HepG2 (cell line): ENCODE measurements at regions of chr1 and their contacts with region 1.

Region 1: DNA sequence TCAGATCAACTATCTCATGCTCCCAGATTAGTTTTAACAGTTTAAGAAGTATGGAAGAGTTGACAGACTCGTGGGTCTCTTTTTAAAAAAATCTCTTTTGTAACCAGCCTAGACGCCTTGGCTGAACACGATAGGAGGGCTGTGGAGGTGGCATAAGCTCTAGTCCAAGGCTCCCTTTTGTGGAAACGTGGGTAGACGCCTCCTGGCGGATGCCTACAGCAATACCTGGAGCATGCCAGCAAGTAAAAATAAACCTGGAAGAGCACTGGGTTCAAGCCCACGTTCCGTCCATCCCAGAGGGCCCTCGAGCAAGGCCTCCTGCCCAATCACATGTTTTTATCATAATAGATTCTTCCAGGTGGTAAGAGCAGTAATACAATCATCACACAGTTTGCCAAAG is 87.9 kb downstream of the RGS7 start:
- DNase-seq: peak; percentile 2
- ATAC-seq: peak; percentile 69
- H3K4me3 ChIP-seq: no peak overlapping the region
- H3K27ac ChIP-seq: no peak overlapping the region
- H3K4me1 ChIP-seq: no peaks in the 10 kb centered on the region
- H3K27me3 ChIP-seq: no peaks in the 10 kb centered on the region
- CTCF ChIP-seq: peak; percentile 53
- EP300 ChIP-seq: no peak
- POLR2A ChIP-seq: no peak
- RAD21 ChIP-seq: no peak

Region 2: DNA sequence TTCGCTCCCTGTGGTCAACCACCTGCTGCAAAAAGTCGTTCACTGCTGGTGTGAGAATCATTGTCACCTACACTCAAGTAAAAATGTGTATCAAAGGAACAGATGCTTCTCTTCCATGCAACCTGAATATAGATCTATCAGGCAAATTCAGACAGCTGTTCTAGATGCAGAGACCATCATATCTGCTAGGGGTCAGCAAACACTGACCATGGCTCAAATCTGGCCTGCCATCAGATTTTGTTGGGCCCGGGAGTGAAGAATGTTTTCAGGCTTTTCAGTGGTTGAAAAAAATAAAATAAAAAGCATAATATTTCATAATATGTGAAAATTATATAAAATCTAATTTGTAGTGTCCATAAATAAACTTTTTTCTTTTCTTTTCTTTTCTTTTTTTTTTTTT is 111.7 kb before region 1 on chr1:
- CTCF ChIA-PET with region 1: no interaction called
- POLR2A ChIA-PET with region 1: no interaction called
- in situ Hi-C with region 1: no loop called
- intact Hi-C with region 1: loop called (anchors 1 kb)
- DNase-seq: no peak
- ATAC-seq: peak; percentile 40; the same call in 1 of the 3 replicates
- H3K4me3 ChIP-seq: no peak overlapping the region
- H3K27ac ChIP-seq: no peak overlapping the region
- H3K4me1 ChIP-seq: no peaks in the 10 kb centered on the region
- H3K27me3 ChIP-seq: no peaks in the 10 kb centered on the region
- CTCF ChIP-seq: no peak
- EP300 ChIP-seq: no peak
- POLR2A ChIP-seq: no peak
- RAD21 ChIP-seq: no peak